ENCODE measurements at regions of chr6 and their contacts with region 1.

Region 1: GRCh38 chr6:41027799-41028628 is 11.0 kb downstream of the UNC5CL start:
- DNase-seq: peak; percentile 87
- ATAC-seq: peak; percentile 86
- H3K4me3 Mint-ChIP-seq: peak overlapping the region; percentile 64
- H3K27ac Mint-ChIP-seq: no peak overlapping the region
- H3K4me1 Mint-ChIP-seq: peaks cover 23% of the 10 kb centered on the region
- H3K27me3 Mint-ChIP-seq: no peaks in the 10 kb centered on the region; the same call in 1 of the 2 replicates
- CTCF ChIP-seq: peak; percentile 99

Region 2: DNA sequence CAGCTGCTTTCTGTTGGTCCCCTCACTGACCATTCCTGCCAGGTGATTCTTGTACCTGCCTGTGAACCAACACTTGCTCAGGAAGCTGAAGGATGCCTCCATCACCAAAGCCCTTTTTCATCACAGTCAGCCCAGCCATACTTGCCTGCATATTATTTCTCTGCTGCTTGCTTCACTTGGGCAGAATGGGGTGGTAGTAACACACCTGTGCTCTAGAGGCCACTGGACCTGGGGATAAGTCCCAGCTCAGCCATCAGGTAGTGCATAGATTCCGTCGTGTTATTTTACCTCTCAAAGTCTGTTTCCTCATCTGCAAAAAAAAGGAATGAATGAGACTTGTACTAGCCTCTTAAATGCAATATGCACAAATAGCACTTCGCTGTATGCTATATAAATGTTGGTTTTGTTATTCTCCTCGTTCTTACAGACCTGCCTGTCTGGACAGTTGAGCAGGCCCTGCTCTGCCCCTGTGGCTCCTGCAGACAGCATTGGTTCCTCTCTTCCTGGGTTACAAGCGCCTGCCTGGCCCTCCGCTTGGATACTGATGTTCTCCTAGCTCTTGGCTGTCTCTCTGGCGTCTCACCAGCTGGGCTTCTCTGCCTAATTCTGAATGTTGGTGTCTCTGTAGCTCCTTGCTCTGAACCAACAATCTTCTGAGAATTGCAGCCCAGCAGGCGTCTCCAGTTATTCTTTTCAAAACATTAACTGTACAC is 140.8 kb before region 1 on chr6:
- CTCF ChIA-PET with region 1: interaction called, 17 read pairs
- POLR2A ChIA-PET with region 1: no interaction called
- DNase-seq: no peak
- ATAC-seq: peak; percentile 67
- H3K4me3 Mint-ChIP-seq: no peak overlapping the region
- H3K27ac Mint-ChIP-seq: no peak overlapping the region
- H3K4me1 Mint-ChIP-seq: peaks cover 3% of the 10 kb centered on the region; the same call in 1 of the 2 replicates
- H3K27me3 Mint-ChIP-seq: peaks cover 3% of the 10 kb centered on the region
- CTCF ChIP-seq: no peak

Region 3: DNA sequence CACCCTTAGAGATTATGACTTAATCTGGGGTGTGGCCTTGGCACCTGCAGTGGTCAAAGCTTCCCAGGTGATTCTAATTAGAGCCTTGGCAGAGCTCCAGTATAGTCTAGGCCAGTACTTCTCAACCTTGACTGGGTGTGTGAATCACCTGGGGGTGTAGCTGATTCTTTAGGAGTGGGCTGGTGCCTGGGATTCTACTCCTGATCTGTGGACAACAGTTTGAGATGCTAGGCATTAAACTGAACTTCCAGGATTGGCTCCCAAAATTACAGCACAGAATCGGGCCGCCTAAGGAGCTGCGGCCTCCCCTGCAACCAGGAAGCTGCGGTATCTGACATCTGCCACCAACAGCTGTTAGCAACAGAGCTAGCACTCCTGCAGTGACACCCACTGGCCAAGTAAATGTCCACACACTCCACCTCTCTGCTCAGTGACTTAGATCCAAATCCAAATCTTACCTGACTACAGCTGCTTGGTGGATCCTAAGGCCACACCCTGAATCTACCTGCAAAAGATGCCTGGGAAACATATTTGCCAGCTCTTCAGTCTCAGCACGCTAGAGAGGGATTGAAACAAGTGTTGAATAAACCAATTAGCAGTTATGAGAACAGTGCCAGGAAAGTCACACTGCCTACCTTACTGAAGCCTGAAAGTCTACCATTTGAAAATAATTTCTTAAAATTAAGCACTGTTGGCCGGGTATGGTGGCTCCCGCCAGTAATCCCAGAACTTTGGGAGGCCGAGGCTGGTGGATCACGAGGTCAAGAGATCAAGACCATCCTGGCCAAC is 115.7 kb before region 1 on chr6:
- CTCF ChIA-PET with region 1: interaction called, 38 read pairs
- POLR2A ChIA-PET with region 1: no interaction called
- DNase-seq: peak; percentile 53
- ATAC-seq: peak; percentile 97
- H3K4me3 Mint-ChIP-seq: no peak overlapping the region
- H3K27ac Mint-ChIP-seq: no peak overlapping the region
- H3K4me1 Mint-ChIP-seq: peaks cover 8% of the 10 kb centered on the region
- H3K27me3 Mint-ChIP-seq: peaks cover 45% of the 10 kb centered on the region
- CTCF ChIP-seq: no peak

Region 4: GRCh38 chr6:40925341-40925740 is 102.7 kb before region 1 on chr6:
- CTCF ChIA-PET with region 1: interaction called, 11 read pairs
- POLR2A ChIA-PET with region 1: no interaction called
- DNase-seq: no peak
- ATAC-seq: no peak
- H3K4me3 Mint-ChIP-seq: no peak overlapping the region
- H3K27ac Mint-ChIP-seq: no peak overlapping the region
- H3K4me1 Mint-ChIP-seq: peaks cover 2% of the 10 kb centered on the region
- H3K27me3 Mint-ChIP-seq: peaks cover 51% of the 10 kb centered on the region
- CTCF ChIP-seq: no peak

Region 5: GRCh38 chr6:40992746-40993145 is 35.3 kb before region 1 on chr6:
- CTCF ChIA-PET with region 1: interaction called, 97 read pairs
- POLR2A ChIA-PET with region 1: no interaction called
- DNase-seq: no peak
- ATAC-seq: no peak
- H3K4me3 Mint-ChIP-seq: no peak overlapping the region
- H3K27ac Mint-ChIP-seq: no peak overlapping the region
- H3K4me1 Mint-ChIP-seq: peaks cover 29% of the 10 kb centered on the region
- H3K27me3 Mint-ChIP-seq: peaks cover 17% of the 10 kb centered on the region
- CTCF ChIP-seq: no peak

Region 6: GRCh38 chr6:41013466-41014153 is 14.4 kb before region 1 on chr6:
- CTCF ChIA-PET with region 1: interaction called, 28 read pairs
- POLR2A ChIA-PET with region 1: no interaction called
- DNase-seq: no peak
- ATAC-seq: no peak
- H3K4me3 Mint-ChIP-seq: no peak overlapping the region
- H3K27ac Mint-ChIP-seq: no peak overlapping the region
- H3K4me1 Mint-ChIP-seq: peaks cover 7% of the 10 kb centered on the region; the same call in 1 of the 2 replicates
- H3K27me3 Mint-ChIP-seq: peaks cover 3% of the 10 kb centered on the region; the same call in 1 of the 2 replicates
- CTCF ChIP-seq: no peak

Region 7: DNA sequence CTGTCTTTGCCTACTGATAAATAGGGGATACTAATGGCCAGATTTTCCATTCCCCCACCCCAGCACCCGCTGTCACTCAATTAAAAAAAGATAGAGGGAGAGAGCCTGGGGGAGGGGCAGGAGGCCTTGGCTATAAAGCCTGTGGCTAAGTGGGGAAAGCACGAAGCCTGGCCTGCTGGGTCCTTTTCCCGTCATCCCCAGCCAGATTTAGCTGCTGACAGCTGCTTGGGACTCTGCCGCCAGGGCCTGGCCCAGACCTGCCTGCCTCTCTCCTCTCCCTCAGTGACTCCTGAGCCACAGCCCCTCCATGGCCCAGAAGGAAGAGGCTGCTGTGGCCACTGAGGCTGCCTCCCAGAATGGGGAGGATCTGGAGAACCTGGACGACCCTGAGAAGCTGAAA is 25.0 kb after region 1 on chr6 and contains the start of gene APOBEC2:
- CTCF ChIA-PET with region 1: interaction called, 13 read pairs
- POLR2A ChIA-PET with region 1: no interaction called
- DNase-seq: no peak
- ATAC-seq: no peak; the same call in 1 of the 2 replicates
- H3K4me3 Mint-ChIP-seq: no peak within 1 kb of the TSS
- H3K27ac Mint-ChIP-seq: no peak within 1 kb of the TSS
- H3K4me1 Mint-ChIP-seq: peaks cover 23% of the 10 kb centered on the region
- H3K27me3 Mint-ChIP-seq: no peaks in the 10 kb centered on the region
- CTCF ChIP-seq: no peak
- total RNA-seq, gene APOBEC2: not detected in 3 replicates

Region 8: GRCh38 chr6:41083072-41083471 is 55.1 kb after region 1 on chr6:
- CTCF ChIA-PET with region 1: no interaction called
- POLR2A ChIA-PET with region 1: no interaction called
- DNase-seq: no peak
- ATAC-seq: no peak
- H3K4me3 Mint-ChIP-seq: no peak overlapping the region
- H3K27ac Mint-ChIP-seq: no peak overlapping the region
- H3K4me1 Mint-ChIP-seq: no peaks in the 10 kb centered on the region
- H3K27me3 Mint-ChIP-seq: no peaks in the 10 kb centered on the region
- CTCF ChIP-seq: no peak